HepG2 (cell line): ENCODE measurements at regions of chr2 and their contacts with region 1.

Region 1: DNA sequence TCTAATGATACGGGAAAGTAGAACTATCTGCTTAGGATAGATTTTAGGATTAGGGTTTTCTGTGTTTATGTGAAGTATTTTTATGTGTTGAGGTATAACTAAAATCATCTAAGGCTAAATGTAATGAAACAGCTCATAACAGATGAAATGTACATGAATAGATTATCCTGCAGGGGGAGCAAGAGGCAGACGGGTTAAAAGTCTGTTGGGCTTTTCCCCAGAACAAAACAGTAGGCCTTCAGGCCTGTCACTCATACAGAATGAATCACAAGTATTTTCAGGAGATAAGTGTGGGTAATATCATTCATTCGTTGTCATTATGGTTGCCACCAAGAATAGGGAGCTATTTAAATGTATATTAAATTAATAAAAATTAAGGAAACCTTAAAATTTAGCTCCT is 107.9 kb upstream of the IL1R2 start:
- DNase-seq: peak; percentile 60
- ATAC-seq: peak; percentile 73
- H3K4me3 ChIP-seq: no peak overlapping the region
- H3K27ac ChIP-seq: no peak overlapping the region
- H3K4me1 ChIP-seq: no peaks in the 10 kb centered on the region
- H3K27me3 ChIP-seq: no peaks in the 10 kb centered on the region
- CTCF ChIP-seq: peak; percentile 68
- EP300 ChIP-seq: no peak
- POLR2A ChIP-seq: no peak
- RAD21 ChIP-seq: peak; percentile 59

Region 2: DNA sequence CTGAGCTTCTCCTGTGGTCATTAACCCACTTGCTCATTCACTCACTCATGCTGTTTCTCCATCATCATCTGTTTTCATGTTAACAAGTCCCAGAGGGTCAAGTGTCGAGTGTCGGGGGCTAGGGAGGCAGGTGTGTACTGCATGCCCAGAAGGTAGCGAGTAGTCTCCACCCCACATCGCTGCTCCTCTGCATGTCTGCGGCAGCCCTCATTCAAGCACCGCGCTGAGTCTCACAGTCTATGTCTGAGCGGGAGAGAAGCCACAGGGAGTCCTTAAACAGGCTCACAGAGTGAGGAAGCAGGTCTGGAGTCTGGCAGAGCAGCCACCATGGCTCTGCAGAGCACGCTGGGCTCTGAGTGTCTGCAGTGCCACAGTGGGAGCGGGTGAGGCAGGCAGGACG is 13.4 kb before region 1 on chr2:
- CTCF ChIA-PET with region 1: no interaction called
- POLR2A ChIA-PET with region 1: no interaction called
- in situ Hi-C with region 1: no loop called
- intact Hi-C with region 1: no loop called
- DNase-seq: no peak
- ATAC-seq: peak; percentile 30; the same call in 2 of the 3 replicates
- H3K4me3 ChIP-seq: no peak overlapping the region
- H3K27ac ChIP-seq: no peak overlapping the region
- H3K4me1 ChIP-seq: no peaks in the 10 kb centered on the region
- H3K27me3 ChIP-seq: no peaks in the 10 kb centered on the region
- CTCF ChIP-seq: no peak
- EP300 ChIP-seq: no peak
- POLR2A ChIP-seq: no peak
- RAD21 ChIP-seq: no peak

Region 3: GRCh38 chr2:101961296-101962191 is 77.7 kb after region 1 on chr2:
- CTCF ChIA-PET with region 1: no interaction called
- POLR2A ChIA-PET with region 1: interaction called, 3 read pairs
- in situ Hi-C with region 1: no loop called
- intact Hi-C with region 1: loop called (anchors 1 kb)
- DNase-seq: peak; percentile 95
- ATAC-seq: peak; percentile 89
- H3K4me3 ChIP-seq: peak overlapping the region; percentile 18 to 65 (median 37); a peak in 5 of 6 replicates
- H3K27ac ChIP-seq: peak overlapping the region; percentile 80
- H3K4me1 ChIP-seq: peaks cover 35% of the 10 kb centered on the region
- H3K27me3 ChIP-seq: no peaks in the 10 kb centered on the region
- CTCF ChIP-seq: peak; percentile 36
- EP300 ChIP-seq: peak; percentile 68 to 85
- POLR2A ChIP-seq: peak in 1 of 2 experiments; percentile 46; a peak in 1 of 4 replicates
- RAD21 ChIP-seq: no peak; the same call in 1 of the 2 replicates

Region 4: DNA sequence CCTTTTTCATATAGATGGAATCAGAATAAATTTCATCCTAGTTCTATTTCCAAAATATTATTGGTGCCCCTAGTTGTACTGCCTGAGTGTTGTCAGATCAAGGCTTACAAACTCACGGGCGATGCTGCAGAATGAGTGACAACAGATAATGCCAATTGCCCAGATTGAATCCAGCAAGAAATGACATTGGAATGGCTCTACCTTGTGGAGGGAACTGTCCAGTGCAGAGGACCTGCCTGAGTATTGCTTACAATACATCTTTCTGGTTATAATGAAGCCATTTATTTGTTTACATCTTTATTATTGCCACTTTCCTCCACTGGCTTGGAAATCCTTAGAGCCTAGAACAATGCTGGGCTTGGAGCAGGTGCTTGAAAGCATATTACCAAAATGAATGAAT is 100.1 kb after region 1 on chr2:
- CTCF ChIA-PET with region 1: interaction called, 3 read pairs
- POLR2A ChIA-PET with region 1: no interaction called
- in situ Hi-C with region 1: no loop called
- intact Hi-C with region 1: loop called (anchors 2 kb)
- DNase-seq: peak; percentile 40
- ATAC-seq: peak; percentile 27
- H3K4me3 ChIP-seq: no peak overlapping the region
- H3K27ac ChIP-seq: no peak overlapping the region
- H3K4me1 ChIP-seq: peaks cover 49% of the 10 kb centered on the region
- H3K27me3 ChIP-seq: peaks cover 3 to 15% of the 10 kb centered on the region in 2 experiments; a peak in 3 of 5 replicates
- CTCF ChIP-seq: peak; percentile 62
- EP300 ChIP-seq: no peak
- POLR2A ChIP-seq: no peak
- RAD21 ChIP-seq: peak; percentile 70; the same call in 1 of the 2 replicates

Region 5: DNA sequence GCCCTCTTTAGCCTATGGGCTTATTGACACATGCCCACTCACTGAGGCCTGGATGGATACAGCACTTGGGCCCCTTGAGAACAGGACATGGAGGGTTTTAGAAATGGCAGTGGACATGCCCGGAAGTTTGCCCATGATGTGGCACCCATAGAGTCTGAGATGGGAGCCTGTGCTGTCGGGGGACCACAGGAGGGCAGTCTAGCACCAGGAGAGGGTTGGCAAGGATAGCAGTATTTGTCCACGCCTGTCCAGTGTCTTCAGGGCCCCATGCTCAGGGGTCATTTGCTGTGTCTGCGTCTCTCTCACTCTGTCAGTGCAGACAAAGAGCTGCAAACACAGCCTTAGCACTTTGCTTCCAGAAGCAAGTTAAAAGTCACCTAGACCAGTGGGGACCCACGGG is 351.6 kb after region 1 on chr2:
- CTCF ChIA-PET with region 1: interaction called, 10 read pairs
- POLR2A ChIA-PET with region 1: no interaction called
- in situ Hi-C with region 1: loop called (anchors 10 kb)
- intact Hi-C with region 1: loop called (anchors 1 kb)
- DNase-seq: peak; percentile 61
- ATAC-seq: peak; percentile 94
- H3K4me3 ChIP-seq: peak overlapping the region in 1 of 3 experiments; percentile 10; a peak in 1 of 6 replicates
- H3K27ac ChIP-seq: no peak overlapping the region
- H3K4me1 ChIP-seq: peaks cover 59% of the 10 kb centered on the region
- H3K27me3 ChIP-seq: no peaks in the 10 kb centered on the region
- CTCF ChIP-seq: peak; percentile 80
- EP300 ChIP-seq: no peak
- POLR2A ChIP-seq: no peak
- RAD21 ChIP-seq: peak; percentile 82

Region 6: DNA sequence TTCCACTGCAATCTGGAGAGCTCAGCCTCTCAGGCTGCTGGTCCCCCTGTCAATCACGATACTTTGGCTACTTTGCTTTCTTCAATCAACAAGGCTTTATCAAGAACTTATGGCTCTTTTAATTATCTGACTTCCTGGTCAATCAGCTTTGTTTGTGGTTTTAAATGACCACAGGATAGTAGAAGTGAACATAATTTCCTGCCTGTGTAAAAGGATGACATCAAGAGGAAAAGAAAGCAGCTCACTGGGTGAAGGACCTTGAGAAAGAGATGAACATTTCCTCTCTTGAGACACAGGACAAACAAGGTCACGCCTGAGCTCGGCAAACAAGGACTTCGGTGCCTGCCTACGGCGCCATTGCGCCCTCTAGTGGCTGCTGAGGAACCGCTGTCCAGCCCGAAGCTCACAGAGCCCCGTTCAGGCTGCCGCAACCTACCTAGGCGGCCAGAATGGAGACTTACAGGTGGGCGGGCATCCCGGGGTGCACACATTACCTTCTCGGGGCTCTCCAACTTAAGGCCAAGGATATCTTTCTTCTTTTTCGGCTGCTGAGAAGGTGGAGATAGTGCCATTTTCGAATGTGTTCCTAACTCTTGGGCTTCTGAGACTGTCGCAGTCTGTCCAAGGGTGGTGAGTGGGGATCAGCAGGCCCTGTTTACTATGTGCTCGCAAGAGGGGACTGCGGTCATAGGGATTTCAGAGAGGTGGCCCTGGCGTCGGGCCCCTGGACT is 356.9 kb after region 1 on chr2:
- CTCF ChIA-PET with region 1: interaction called, 10 read pairs
- POLR2A ChIA-PET with region 1: no interaction called
- in situ Hi-C with region 1: loop called (anchors 10 kb)
- intact Hi-C with region 1: loop called (anchors 1 kb)
- DNase-seq: peak; percentile 88
- ATAC-seq: peak; percentile 97
- H3K4me3 ChIP-seq: peak overlapping the region in 2 of 3 experiments; percentile 12 to 55; a peak in 3 of 6 replicates
- H3K27ac ChIP-seq: no peak overlapping the region
- H3K4me1 ChIP-seq: peaks cover 49% of the 10 kb centered on the region
- H3K27me3 ChIP-seq: peaks cover 0 to 38% of the 10 kb centered on the region in 2 experiments; a peak in 3 of 5 replicates
- CTCF ChIP-seq: peak; percentile 100
- EP300 ChIP-seq: peak in 1 of 2 experiments; percentile 86; a peak in 2 of 4 replicates
- POLR2A ChIP-seq: no peak
- RAD21 ChIP-seq: peak; percentile 97

Region 7: DNA sequence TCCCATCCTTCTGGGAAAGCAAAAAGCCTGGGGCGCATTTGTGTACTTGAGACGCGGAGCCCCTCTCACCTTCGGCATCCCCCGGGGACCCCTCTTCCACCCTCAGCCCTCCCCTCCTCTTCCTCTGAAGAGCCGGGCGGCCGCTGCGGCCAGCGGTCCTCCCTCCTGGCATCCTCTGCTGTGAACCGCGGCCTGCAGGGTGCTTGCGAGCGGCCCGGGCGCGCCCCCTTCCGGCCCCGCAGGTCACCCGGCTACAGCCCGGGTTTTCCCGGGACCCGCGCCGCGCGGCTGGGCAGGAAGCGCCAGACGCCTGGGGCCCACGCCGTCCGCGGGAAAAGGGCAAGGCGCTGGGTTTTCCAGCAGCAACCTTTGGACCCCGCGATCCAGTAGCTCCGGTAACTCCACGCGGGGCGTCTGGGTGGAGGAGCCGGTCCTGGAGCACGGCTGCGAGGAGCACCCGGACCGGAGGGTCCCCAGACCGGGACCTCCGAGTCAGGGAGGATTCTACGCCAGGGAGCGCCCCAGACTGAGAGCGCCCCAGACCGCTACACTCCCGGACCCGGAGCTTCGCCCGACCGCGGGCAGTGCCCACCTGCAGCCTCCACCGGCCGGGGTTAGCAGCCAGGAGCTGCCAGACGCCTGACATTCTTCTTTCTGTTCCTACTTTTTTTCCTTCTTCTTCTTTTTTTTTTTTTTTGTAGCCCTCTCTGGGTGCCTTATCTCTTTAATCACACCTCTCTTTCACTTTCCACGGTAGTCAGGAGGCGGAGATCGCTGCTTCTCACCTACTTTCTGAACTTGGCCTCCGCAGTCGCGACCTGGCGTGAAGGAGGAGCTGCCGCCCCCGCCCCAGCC is 471.9 kb after region 1 on chr2 and contains the start of gene IL18R1:
- CTCF ChIA-PET with region 1: interaction called, 8 read pairs
- POLR2A ChIA-PET with region 1: no interaction called
- in situ Hi-C with region 1: no loop called
- intact Hi-C with region 1: loop called (anchors 10 kb)
- DNase-seq: peak; percentile 53
- ATAC-seq: peak; percentile 100
- H3K4me3 ChIP-seq: peak within 1 kb of the TSS; percentile 55 to 77 (median 70)
- H3K27ac ChIP-seq: no peak within 1 kb of the TSS
- H3K4me1 ChIP-seq: no peaks in the 10 kb centered on the region; the same call in 1 of the 2 replicates
- H3K27me3 ChIP-seq: peaks cover 2 to 18% of the 10 kb centered on the region in 2 experiments; a peak in 4 of 5 replicates
- CTCF ChIP-seq: peak; percentile 90
- EP300 ChIP-seq: no peak
- POLR2A ChIP-seq: no peak
- RAD21 ChIP-seq: peak; percentile 94
- total RNA-seq, gene IL18R1: 0.04 TPM in 1 of 2 replicates, not detected in the other

Region 8: GRCh38 chr2:102449370-102449974 is 565.6 kb after region 1 on chr2:
- CTCF ChIA-PET with region 1: interaction called, 5 read pairs
- POLR2A ChIA-PET with region 1: no interaction called
- in situ Hi-C with region 1: no loop called
- intact Hi-C with region 1: loop called (anchors 5 kb)
- DNase-seq: peak; percentile 23
- ATAC-seq: peak; percentile 53; the same call in 2 of the 3 replicates
- H3K4me3 ChIP-seq: no peak overlapping the region
- H3K27ac ChIP-seq: no peak overlapping the region
- H3K4me1 ChIP-seq: no peaks in the 10 kb centered on the region
- H3K27me3 ChIP-seq: peaks cover 0 to 3% of the 10 kb centered on the region in 2 experiments; a peak in 1 of 5 replicates
- CTCF ChIP-seq: peak; percentile 72
- EP300 ChIP-seq: no peak
- POLR2A ChIP-seq: no peak
- RAD21 ChIP-seq: no peak